Dendritic cell treated with granulocyte-macrophage colony-stimulating factor and Interleukin-4, amounts not matched to agents 40 ng/mL and 50 ng/mL, for 4 days (primary cell): ENCODE measurements at regions of chr11 and their contacts with region 1.

Region 1: DNA sequence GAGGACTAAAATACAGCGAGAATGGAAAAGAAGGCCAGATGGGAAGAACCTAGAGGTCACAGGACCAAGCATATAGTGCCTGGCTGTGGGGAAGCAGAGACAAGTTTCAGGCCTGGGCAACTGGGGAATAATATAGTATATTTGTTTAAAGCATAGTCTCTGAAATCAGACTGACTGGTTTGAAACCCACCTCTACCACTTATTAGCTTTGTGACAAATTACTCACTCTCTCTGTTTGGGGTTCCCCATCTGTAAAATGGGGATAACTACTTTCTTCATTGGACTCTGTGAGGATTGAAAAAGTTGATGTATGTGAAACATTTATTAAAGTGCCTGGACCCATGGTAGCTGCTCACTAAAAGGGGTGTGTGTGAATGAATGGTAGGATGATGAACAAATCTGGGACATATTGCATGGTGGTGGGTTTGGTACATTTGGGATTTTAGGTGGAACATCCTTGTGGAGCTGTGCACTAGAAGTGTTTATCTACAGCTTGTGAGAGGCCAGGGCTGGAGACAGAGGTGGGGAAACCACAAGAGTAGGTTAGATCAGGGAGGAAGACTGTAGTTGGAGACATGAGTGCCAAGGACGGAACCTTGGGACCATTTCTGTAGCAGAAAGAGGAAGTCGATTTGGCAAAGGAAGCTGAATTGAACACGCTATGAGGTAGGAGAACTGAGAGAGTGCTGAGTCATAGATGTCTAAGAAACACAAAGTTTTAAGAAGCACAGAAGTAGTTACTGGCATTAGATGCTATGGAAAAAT is 52.6 kb downstream of the SWAP70 start:
- H3K4me3 Mint-ChIP-seq: peak overlapping the region; percentile 24
- H3K27ac Mint-ChIP-seq: peak overlapping the region; percentile 57
- H3K4me1 Mint-ChIP-seq: peaks cover 57% of the 10 kb centered on the region
- H3K27me3 Mint-ChIP-seq: no peaks in the 10 kb centered on the region

Region 2: DNA sequence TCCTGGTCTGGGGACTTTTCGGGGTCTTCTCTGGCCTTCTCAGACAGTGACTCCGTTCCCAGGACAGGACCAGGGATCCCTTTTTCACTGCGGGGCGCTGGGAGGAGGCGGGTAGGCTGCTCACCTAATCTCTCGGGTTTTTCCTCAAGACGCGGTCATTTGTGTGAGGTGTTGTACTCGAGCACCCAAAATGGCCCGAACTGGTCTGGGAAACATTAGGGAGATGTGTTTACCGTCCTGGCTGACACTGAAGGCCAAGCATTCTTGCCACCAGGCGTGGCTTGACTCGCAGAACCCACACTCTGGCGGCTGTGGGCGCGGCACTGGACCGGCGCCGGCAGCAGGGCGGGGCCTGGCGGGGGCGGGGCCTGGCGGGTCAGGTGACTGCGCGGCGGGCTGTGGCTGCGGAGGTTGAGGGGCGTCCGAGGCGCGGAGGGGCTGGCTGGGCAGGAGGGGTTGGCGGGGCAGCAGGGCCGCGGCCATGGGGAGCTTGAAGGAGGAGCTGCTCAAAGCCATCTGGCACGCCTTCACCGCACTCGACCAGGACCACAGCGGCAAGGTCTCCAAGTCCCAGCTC is 52.7 kb before region 1 on chr11 and contains the start of gene SWAP70:
- intact Hi-C with region 1: loop called (anchors 10 kb)
- H3K4me3 Mint-ChIP-seq: peak within 1 kb of the TSS; percentile 99
- H3K27ac Mint-ChIP-seq: peak within 1 kb of the TSS; percentile 94
- H3K4me1 Mint-ChIP-seq: peaks cover 70% of the 10 kb centered on the region
- H3K27me3 Mint-ChIP-seq: no peaks in the 10 kb centered on the region